AG04450 (cell line): ENCODE measurements at regions of chr6 and their contacts with region 1.

Region 1: DNA sequence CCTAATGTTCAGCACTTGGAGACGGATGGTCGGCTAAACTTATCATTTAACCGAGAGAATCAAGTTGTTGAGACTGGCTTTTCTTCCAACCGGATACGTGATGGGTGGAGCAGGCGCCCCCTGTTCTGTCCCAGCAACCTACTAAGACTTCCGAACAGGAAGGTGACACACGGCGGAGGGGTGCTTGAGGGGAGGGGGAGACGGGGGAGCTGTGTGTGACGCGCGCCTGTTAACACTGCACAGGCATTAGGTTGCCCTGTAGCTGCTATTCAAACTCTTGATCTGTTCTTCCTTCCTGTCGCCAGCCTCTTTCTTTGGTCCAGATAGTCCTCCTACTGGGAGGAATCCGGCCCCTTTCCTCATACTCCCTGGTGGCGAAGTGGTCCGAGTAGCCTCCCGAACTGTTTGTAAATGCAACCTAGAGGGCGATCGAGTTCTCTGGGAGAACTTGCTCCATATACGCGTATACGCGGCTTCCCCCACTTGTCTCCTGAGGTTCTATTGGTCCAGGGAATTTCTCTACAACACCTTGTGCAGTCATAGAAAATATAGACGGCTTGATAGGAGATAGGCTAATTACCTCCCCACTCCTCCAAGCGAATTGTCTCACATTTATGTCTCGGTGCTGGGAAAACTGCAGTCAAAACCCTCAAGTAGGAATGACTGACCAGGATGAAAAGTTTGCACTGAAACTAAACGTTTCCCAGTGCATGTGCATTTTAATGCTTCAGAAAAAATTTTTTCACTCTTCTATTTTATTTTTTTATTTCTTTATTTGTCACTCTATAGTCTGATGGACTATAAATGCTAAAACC is 126.0 kb upstream of the SLC2A12 start:
- DNase-seq: peak; percentile 86
- H3K4me3 ChIP-seq: peak overlapping the region; percentile 55
- H3K27ac ChIP-seq: peak overlapping the region; percentile 79
- H3K27me3 ChIP-seq: no peaks in the 10 kb centered on the region
- CTCF ChIP-seq: peak; percentile 97

Region 2: GRCh38 chr6:133966654-133967329 is 211.6 kb before region 1 on chr6:
- CTCF ChIA-PET with region 1: no interaction called
- POLR2A ChIA-PET with region 1: no interaction called
- DNase-seq: no peak
- H3K4me3 ChIP-seq: no peak overlapping the region
- H3K27ac ChIP-seq: no peak overlapping the region
- H3K27me3 ChIP-seq: no peaks in the 10 kb centered on the region
- CTCF ChIP-seq: no peak

Region 3: DNA sequence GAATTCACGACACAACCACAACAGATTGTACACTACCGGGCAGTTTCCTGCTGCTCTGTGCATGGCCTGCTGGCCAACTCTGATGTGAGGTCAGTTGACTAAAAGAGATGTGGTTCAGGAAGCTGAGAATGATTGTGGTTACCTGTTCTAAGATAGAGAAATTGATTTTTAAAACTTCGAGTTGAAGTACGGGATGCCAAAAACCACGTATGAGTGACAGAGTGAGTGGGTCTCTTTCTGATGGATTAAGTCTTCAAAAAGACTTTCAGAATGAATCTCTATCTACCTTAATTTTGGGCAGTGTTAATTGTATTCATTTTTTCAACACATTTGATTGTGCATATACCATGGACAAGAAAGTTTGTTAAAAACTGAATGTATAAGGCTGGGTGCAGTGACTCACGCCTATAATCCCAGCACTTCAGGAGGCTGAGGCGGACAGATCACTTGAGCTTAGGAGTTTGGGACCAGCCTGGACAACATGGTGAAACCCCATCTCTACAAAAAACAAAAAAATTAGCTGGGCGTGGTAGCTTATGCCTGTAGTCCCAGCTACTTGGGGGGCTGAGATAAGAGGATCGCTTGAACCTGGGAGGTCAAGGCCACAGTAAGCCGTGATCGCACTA is 18.2 kb after region 1 on chr6:
- CTCF ChIA-PET with region 1: interaction called, 18 read pairs
- POLR2A ChIA-PET with region 1: interaction called, 3 read pairs
- DNase-seq: no peak
- H3K4me3 ChIP-seq: no peak overlapping the region
- H3K27ac ChIP-seq: no peak overlapping the region
- H3K27me3 ChIP-seq: no peaks in the 10 kb centered on the region
- CTCF ChIP-seq: no peak

Region 4: GRCh38 chr6:134822920-134823709 is 644.7 kb after region 1 on chr6:
- CTCF ChIA-PET with region 1: interaction called, 29 read pairs
- POLR2A ChIA-PET with region 1: interaction called, 11 read pairs
- DNase-seq: peak; percentile 66
- H3K4me3 ChIP-seq: no peak overlapping the region
- H3K27ac ChIP-seq: no peak overlapping the region
- H3K27me3 ChIP-seq: no peaks in the 10 kb centered on the region
- CTCF ChIP-seq: peak; percentile 95